CD8-positive, alpha-beta T cell (primary cell): ENCODE measurements at regions of chr11 and their contacts with region 1.

Region 1: GRCh38 chr11:74170694-74171629 is at the starts of genes C2CD3 and PPME1:
- DNase-seq: peak; percentile 95 to 100 (median 96)
- ATAC-seq: peak; percentile 94
- H3K4me3 ChIP-seq: peak within 1 kb of the TSS; percentile 80 to 86
- H3K4me3 Mint-ChIP-seq: no peak within 1 kb of the TSS
- H3K27ac ChIP-seq: peak within 1 kb of the TSS; percentile 64 to 82
- H3K27ac Mint-ChIP-seq: no peak within 1 kb of the TSS
- H3K4me1 ChIP-seq: peaks cover 35% of the 10 kb centered on the region
- H3K4me1 Mint-ChIP-seq: peaks cover 36% of the 10 kb centered on the region
- H3K27me3 ChIP-seq: no peaks in the 10 kb centered on the region
- H3K27me3 Mint-ChIP-seq: no peaks in the 10 kb centered on the region
- CTCF ChIP-seq: no peak
- total RNA-seq, gene C2CD3: 27.1 to 30.5 TPM
- total RNA-seq, gene PPME1: 12.4 to 15.0 TPM

Region 2: DNA sequence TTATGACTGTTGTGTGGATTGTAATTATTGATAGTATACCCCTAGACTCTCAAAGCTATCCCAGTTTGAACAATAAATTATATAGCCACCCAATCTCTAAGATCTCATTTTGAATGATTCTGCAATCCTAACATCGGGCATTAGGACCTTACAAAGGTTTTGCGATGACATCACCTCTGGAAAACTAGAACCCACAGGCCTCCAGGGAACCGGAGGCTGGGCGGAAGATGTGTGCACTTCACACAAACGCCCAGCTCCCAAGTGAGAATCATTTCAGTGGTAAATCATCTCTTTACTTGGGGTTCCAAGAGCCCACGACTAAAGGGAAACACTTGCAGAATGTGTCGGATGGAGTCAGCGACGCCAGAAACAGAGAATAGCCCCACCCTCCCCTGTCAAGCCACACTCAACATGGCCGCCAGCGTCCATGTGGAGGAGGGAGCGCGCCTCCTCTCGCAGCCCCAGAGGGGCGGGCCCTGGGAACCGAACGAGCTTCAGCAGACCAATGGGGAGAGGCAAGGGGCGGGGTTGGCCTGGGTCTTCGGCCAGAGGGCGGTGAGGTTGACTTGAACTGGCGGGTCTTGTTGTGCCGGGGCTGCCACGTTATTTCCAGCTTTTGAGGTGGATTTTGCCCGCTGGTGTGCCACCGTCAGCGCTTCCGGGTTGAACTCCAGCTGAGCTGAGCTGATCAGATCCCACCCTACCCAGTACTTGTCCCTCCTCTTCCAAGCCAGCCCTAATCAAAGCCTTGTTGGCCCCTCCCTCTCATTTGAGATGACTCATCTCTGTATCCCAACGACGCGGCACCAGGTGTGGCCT is 391.7 kb before region 1 on chr11:
- CTCF ChIA-PET with region 1: no interaction called
- POLR2A ChIA-PET with region 1: no interaction called
- intact Hi-C with region 1: loop called (anchors 5 kb)
- DNase-seq: peak; percentile 95 to 99 (median 97)
- ATAC-seq: peak; percentile 97
- H3K4me3 ChIP-seq: peak overlapping the region; percentile 52 to 62
- H3K4me3 Mint-ChIP-seq: peak overlapping the region; percentile 97
- H3K27ac ChIP-seq: peak overlapping the region; percentile 83 to 97
- H3K27ac Mint-ChIP-seq: peak overlapping the region; percentile 100
- H3K4me1 ChIP-seq: peaks cover 4% of the 10 kb centered on the region
- H3K4me1 Mint-ChIP-seq: peaks cover 16% of the 10 kb centered on the region
- H3K27me3 ChIP-seq: no peaks in the 10 kb centered on the region
- H3K27me3 Mint-ChIP-seq: no peaks in the 10 kb centered on the region
- CTCF ChIP-seq: no peak

Region 3: DNA sequence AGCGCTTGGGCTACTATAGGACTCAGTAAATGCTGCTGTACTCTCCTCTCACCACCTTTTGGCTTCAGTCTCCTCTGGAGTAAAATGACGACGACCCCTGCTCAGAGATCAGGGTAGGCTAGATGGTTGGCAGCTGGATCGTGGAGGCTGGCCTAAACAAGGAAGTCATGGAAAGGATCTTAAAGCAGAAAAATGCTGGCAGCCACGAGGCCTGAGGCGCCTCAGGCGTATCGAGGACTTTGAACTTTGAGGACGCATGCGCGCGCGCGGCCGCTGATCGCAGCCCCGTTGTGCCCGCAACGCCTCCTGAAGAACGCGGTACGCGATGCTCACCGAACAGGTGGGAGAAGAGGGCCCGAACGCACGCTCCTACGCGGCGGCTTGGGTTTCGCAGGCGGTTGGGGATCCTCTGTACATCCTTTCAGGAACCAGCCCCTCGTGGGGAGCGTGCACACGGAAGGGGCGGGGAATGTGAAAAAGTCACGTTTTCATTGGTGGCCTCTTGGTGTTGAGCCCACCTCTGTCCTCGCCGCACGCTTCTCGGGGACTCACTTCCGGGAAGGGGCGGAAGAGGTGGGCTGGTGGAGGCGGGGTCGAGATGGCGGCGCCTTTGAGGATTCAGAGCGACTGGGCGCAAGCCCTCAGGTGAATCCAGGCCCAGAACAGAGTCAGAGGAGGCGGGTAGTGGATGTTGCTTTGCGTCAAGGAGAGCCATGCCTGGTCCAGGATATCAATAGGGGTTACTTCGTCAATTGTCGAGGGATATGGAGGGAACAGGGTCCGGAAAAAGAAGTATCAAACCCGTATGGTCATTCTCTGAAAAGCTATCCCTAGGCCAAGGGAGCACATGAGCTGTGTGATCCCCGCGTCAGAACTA is 294.3 kb before region 1 on chr11 and contains the starts of genes COA4 and PAAF1:
- CTCF ChIA-PET with region 1: no interaction called
- POLR2A ChIA-PET with region 1: no interaction called
- intact Hi-C with region 1: loop called (anchors 1 kb)
- DNase-seq: peak; percentile 81 to 98 (median 92)
- ATAC-seq: peak; percentile 96
- H3K4me3 ChIP-seq: peak within 1 kb of the TSS; percentile 75 to 79
- H3K4me3 Mint-ChIP-seq: peak within 1 kb of the TSS; percentile 97
- H3K27ac ChIP-seq: peak within 1 kb of the TSS; percentile 79 to 81
- H3K27ac Mint-ChIP-seq: peak within 1 kb of the TSS; percentile 98
- H3K4me1 ChIP-seq: peaks cover 21% of the 10 kb centered on the region
- H3K4me1 Mint-ChIP-seq: peaks cover 42% of the 10 kb centered on the region
- H3K27me3 ChIP-seq: no peaks in the 10 kb centered on the region
- H3K27me3 Mint-ChIP-seq: no peaks in the 10 kb centered on the region
- CTCF ChIP-seq: no peak
- total RNA-seq, gene COA4: 22.0 to 25.1 TPM
- total RNA-seq, gene PAAF1: 6.2 to 6.4 TPM

Region 4: DNA sequence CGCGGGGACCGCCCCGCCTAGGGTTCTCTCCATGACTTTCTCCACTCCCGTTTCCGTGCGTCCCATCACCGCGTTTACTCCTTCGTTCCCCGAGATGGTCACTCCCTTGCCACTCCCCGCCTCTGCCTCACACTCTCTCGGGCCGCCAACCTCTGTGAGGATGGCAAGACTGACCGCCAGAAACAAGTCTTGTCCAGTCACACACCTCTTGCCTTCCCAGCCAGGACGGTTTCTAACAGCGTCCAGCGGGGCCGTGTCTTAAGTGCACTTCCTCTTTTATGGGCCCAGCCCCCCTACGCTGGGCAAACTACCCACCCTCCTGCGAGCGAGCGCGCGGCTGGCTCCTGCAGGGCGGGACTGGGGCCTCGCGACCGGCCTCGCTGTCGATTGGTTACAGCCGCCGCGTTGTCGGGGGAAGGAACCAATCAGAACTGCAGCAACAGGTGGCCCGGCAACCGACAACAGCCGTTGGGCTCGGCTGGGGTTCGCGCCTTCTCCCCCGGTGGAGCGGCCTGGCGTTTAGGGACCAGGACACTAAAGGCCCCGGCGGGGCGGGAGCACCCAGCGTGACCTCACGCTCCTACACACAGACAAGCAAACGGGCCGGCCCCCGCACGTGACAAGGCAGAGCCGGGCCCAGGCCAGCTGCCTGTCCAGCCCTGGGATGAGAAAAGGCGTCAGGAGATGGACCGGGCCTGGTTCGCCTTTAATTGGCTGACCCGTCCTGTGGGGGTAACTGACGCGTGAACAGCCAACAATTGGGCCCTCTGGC is 187.8 kb before region 1 on chr11:
- CTCF ChIA-PET with region 1: no interaction called
- POLR2A ChIA-PET with region 1: interaction called, 13 read pairs
- intact Hi-C with region 1: loop called in 1 of 2 experiments (anchors 5 kb)
- DNase-seq: peak; percentile 83 to 97 (median 92)
- ATAC-seq: peak; percentile 77
- H3K4me3 ChIP-seq: peak overlapping the region; percentile 78 to 100
- H3K4me3 Mint-ChIP-seq: peak overlapping the region; percentile 100
- H3K27ac ChIP-seq: peak overlapping the region; percentile 95 to 99
- H3K27ac Mint-ChIP-seq: peak overlapping the region; percentile 99
- H3K4me1 ChIP-seq: peaks cover 36% of the 10 kb centered on the region
- H3K4me1 Mint-ChIP-seq: peaks cover 48% of the 10 kb centered on the region
- H3K27me3 ChIP-seq: no peaks in the 10 kb centered on the region
- H3K27me3 Mint-ChIP-seq: no peaks in the 10 kb centered on the region
- CTCF ChIP-seq: no peak

Region 5: DNA sequence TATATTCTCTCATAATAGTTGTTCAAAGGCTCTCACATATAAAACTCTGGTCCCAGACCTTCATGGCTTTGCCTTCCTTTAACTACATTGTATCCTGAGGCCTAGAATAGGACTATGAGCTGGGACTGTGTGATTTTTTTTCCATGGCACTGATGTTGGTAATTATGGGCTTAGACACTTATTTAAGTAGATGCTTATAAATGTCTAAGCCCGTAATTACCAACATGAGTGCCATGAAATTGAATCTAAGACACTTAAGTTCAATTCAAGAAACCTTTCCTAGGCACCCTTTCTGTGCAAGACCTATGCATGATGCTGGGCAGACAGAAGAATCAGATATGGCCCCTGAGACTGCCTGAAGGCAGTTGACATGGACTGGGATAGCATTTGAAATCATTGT is 77.5 kb after region 1 on chr11:
- CTCF ChIA-PET with region 1: no interaction called
- POLR2A ChIA-PET with region 1: no interaction called
- intact Hi-C with region 1: no loop called
- DNase-seq: no peak
- ATAC-seq: no peak
- H3K4me3 ChIP-seq: no peak overlapping the region
- H3K4me3 Mint-ChIP-seq: no peak overlapping the region
- H3K27ac ChIP-seq: no peak overlapping the region
- H3K27ac Mint-ChIP-seq: no peak overlapping the region
- H3K4me1 ChIP-seq: no peaks in the 10 kb centered on the region
- H3K4me1 Mint-ChIP-seq: no peaks in the 10 kb centered on the region
- H3K27me3 ChIP-seq: no peaks in the 10 kb centered on the region
- H3K27me3 Mint-ChIP-seq: no peaks in the 10 kb centered on the region
- CTCF ChIP-seq: no peak

Region 6: GRCh38 chr11:74492974-74493790 is 322.2 kb after region 1 on chr11 and contains the start of gene LIPT2:
- CTCF ChIA-PET with region 1: no interaction called
- POLR2A ChIA-PET with region 1: interaction called, 9 read pairs
- intact Hi-C with region 1: loop called in 1 of 2 experiments (anchors 2 kb)
- DNase-seq: peak; percentile 93 to 99 (median 97)
- ATAC-seq: peak; percentile 95
- H3K4me3 ChIP-seq: peak within 1 kb of the TSS; percentile 54 to 97
- H3K4me3 Mint-ChIP-seq: peak within 1 kb of the TSS; percentile 88
- H3K27ac ChIP-seq: peak within 1 kb of the TSS; percentile 53 to 96
- H3K27ac Mint-ChIP-seq: peak within 1 kb of the TSS; percentile 87
- H3K4me1 ChIP-seq: peaks cover 12% of the 10 kb centered on the region
- H3K4me1 Mint-ChIP-seq: peaks cover 18% of the 10 kb centered on the region
- H3K27me3 ChIP-seq: no peaks in the 10 kb centered on the region
- H3K27me3 Mint-ChIP-seq: no peaks in the 10 kb centered on the region
- CTCF ChIP-seq: no peak
- total RNA-seq, gene LIPT2: 8.7 to 9.4 TPM

Region 7: GRCh38 chr11:74748211-74749127 is 577.5 kb after region 1 on chr11 and contains the start of gene RNF169:
- CTCF ChIA-PET with region 1: no interaction called
- POLR2A ChIA-PET with region 1: no interaction called
- intact Hi-C with region 1: loop called in 1 of 2 experiments (anchors 2 kb)
- DNase-seq: peak; percentile 81 to 96 (median 89)
- ATAC-seq: peak; percentile 98
- H3K4me3 ChIP-seq: peak within 1 kb of the TSS; percentile 56 to 63
- H3K4me3 Mint-ChIP-seq: peak within 1 kb of the TSS; percentile 90
- H3K27ac ChIP-seq: peak within 1 kb of the TSS; percentile 62 to 78
- H3K27ac Mint-ChIP-seq: peak within 1 kb of the TSS; percentile 90
- H3K4me1 ChIP-seq: peaks cover 23% of the 10 kb centered on the region
- H3K4me1 Mint-ChIP-seq: peaks cover 43% of the 10 kb centered on the region
- H3K27me3 ChIP-seq: no peaks in the 10 kb centered on the region
- H3K27me3 Mint-ChIP-seq: no peaks in the 10 kb centered on the region
- CTCF ChIP-seq: no peak
- total RNA-seq, gene RNF169: 14.1 to 14.8 TPM

Region 8: GRCh38 chr11:75399344-75400145 is 1228.6 kb after region 1 on chr11 and contains the start of gene RPS3:
- CTCF ChIA-PET with region 1: no interaction called
- POLR2A ChIA-PET with region 1: no interaction called
- intact Hi-C with region 1: loop called in 1 of 2 experiments (anchors 5 kb)
- DNase-seq: peak; percentile 72 to 93 (median 88)
- ATAC-seq: peak; percentile 88
- H3K4me3 ChIP-seq: peak within 1 kb of the TSS; percentile 69 to 76
- H3K4me3 Mint-ChIP-seq: peak within 1 kb of the TSS; percentile 95
- H3K27ac ChIP-seq: peak within 1 kb of the TSS; percentile 88 to 89
- H3K27ac Mint-ChIP-seq: peak within 1 kb of the TSS; percentile 95
- H3K4me1 ChIP-seq: peaks cover 28% of the 10 kb centered on the region
- H3K4me1 Mint-ChIP-seq: peaks cover 48% of the 10 kb centered on the region
- H3K27me3 ChIP-seq: no peaks in the 10 kb centered on the region
- H3K27me3 Mint-ChIP-seq: no peaks in the 10 kb centered on the region
- CTCF ChIP-seq: no peak
- total RNA-seq, gene RPS3: 4,683 to 5,039 TPM